ENCODE measurements at regions of chr20 and their contacts with region 1.

Region 1: GRCh38 chr20:3710703-3711483 is 1.5 kb downstream of the SIGLEC1 start:
- DNase-seq: no peak
- H3K4me3 ChIP-seq: no peak overlapping the region
- H3K27ac ChIP-seq: no peak overlapping the region
- H3K27me3 ChIP-seq: peaks cover 13% of the 10 kb centered on the region
- CTCF ChIP-seq: peak; percentile 93

Region 2: GRCh38 chr20:3563548-3564177 is 147.2 kb before region 1 on chr20:
- CTCF ChIA-PET with region 1: interaction called, 20 read pairs
- POLR2A ChIA-PET with region 1: no interaction called
- DNase-seq: peak; percentile 7
- H3K4me3 ChIP-seq: no peak overlapping the region
- H3K27ac ChIP-seq: no peak overlapping the region
- H3K27me3 ChIP-seq: no peaks in the 10 kb centered on the region
- CTCF ChIP-seq: peak; percentile 81

Region 3: DNA sequence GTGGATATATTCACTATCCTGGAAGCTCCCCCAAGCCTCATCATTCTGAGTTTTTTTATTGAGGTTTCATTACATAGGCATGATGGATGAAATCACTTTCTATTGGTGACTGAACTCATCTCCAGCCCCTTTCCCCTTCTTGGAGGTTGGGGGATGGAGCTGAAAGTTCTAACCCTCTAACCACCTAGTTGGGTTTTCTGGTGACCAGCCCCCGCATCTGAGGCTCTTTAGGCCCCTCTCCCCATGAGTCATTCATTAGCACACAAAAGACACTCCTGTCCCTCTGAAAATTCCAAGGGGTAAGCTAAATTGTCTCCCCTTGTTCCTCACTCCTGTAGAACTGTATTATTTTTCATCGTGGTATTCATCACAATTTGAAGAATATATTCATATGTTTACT is 81.0 kb before region 1 on chr20:
- CTCF ChIA-PET with region 1: no interaction called
- POLR2A ChIA-PET with region 1: no interaction called
- DNase-seq: no peak
- H3K4me3 ChIP-seq: no peak overlapping the region
- H3K27ac ChIP-seq: no peak overlapping the region
- H3K27me3 ChIP-seq: no peaks in the 10 kb centered on the region
- CTCF ChIP-seq: no peak

Region 4: GRCh38 chr20:3679749-3680700 is 30.9 kb before region 1 on chr20:
- CTCF ChIA-PET with region 1: interaction called, 110 read pairs
- POLR2A ChIA-PET with region 1: interaction called, 4 read pairs
- DNase-seq: peak; percentile 27
- H3K4me3 ChIP-seq: peak overlapping the region; percentile 70
- H3K27ac ChIP-seq: peak overlapping the region; percentile 57
- H3K27me3 ChIP-seq: no peaks in the 10 kb centered on the region
- CTCF ChIP-seq: no peak

Region 5: GRCh38 chr20:3696200-3696599 is 14.7 kb before region 1 on chr20:
- CTCF ChIA-PET with region 1: interaction called, 46 read pairs
- POLR2A ChIA-PET with region 1: no interaction called
- DNase-seq: no peak
- H3K4me3 ChIP-seq: no peak overlapping the region
- H3K27ac ChIP-seq: no peak overlapping the region
- H3K27me3 ChIP-seq: peaks cover 14% of the 10 kb centered on the region
- CTCF ChIP-seq: peak; percentile 58

Region 6: DNA sequence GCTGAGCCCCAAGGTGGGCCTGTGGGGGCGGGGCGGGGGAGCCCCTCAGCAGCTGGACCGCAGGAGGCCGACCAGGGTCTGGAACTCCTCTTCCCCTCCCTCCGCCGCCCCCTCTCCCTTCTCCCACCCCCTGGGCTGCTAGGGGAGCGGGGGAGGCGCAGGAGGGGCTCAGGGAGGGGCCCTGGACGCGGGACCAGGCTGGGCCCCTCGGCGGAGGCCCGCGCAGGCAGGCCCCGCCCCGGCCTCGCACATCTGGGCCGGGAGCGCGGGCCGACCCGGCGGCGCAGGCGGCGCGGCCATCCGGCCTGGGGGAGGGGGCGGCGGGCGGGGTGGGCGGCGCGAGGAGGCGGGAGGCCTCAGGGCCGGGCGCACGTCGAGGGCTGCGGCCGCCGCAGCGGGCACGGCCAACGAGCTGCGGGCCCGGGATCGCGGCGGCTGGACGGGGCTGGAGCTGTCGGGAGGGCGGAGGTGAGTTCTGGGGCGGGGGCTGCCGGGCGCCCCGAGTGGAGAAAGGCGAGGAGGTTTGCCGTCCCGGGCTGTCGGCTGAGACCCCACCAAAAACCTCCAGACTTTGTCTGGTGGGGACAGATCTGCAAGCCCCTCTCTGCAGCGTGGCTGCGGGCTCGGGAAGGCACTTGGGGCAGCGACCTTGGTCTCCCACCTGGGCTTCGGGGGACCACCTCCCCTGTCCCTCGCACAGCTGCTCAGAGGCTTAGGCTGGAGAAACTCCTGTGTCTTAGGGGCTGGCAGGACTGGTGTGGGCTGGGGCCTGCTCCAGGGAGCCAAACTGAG is 21.6 kb after region 1 on chr20 and contains the start of gene HSPA12B:
- CTCF ChIA-PET with region 1: interaction called, 26 read pairs
- POLR2A ChIA-PET with region 1: no interaction called
- DNase-seq: no peak
- H3K4me3 ChIP-seq: no peak within 1 kb of the TSS; the same call in 1 of the 2 replicates
- H3K27ac ChIP-seq: no peak within 1 kb of the TSS
- H3K27me3 ChIP-seq: peaks cover 53% of the 10 kb centered on the region
- CTCF ChIP-seq: no peak
- polyA plus RNA-seq, gene HSPA12B: 0.05 and 0.09 TPM in 2 replicates